ENCODE measurements at regions of chr12 and their contacts with region 1.

Region 1: GRCh38 chr12:110721570-110721969 is 21.1 kb downstream of the PPP1CC start:
- DNase-seq: no peak
- CTCF ChIP-seq: no peak

Region 2: GRCh38 chr12:110836291-110836690 is 114.7 kb after region 1 on chr12:
- in situ Hi-C with region 1: loop called (anchors 10 kb)
- DNase-seq: no peak
- CTCF ChIP-seq: no peak

Region 3: GRCh38 chr12:110846615-110847566 is 125.3 kb after region 1 on chr12 and contains the start of gene CCDC63:
- in situ Hi-C with region 1: no loop called
- DNase-seq: peak; percentile 60
- CTCF ChIP-seq: peak; percentile 55